Naive thymus-derived CD4-positive, alpha-beta T cell (primary cell): ENCODE measurements at regions of chrX and their contacts with region 1.

Region 1: GRCh38 chrX:12984629-12985319 is 9.9 kb downstream of the TMSB4X start:
- DNase-seq: peak in 8 of 9 donors; percentile 53 to 73 (median 69)
- ATAC-seq: peak; percentile 84
- H3K4me3 ChIP-seq: peak overlapping the region; percentile 21
- H3K4me3 Mint-ChIP-seq: peak overlapping the region; percentile 61 to 82 (median 75)
- H3K27ac ChIP-seq: peak overlapping the region; percentile 67
- H3K27ac Mint-ChIP-seq: peak overlapping the region; percentile 92 to 99 (median 97)
- H3K4me1 ChIP-seq: peaks cover 64 to 67% of the 10 kb centered on the region in 2 donors
- H3K4me1 Mint-ChIP-seq: peaks cover 28 to 90% (median 68%) of the 10 kb centered on the region in 7 donors
- H3K27me3 ChIP-seq: no peaks in the 10 kb centered on the region
- H3K27me3 Mint-ChIP-seq: no peaks in the 10 kb centered on the region

Region 2: DNA sequence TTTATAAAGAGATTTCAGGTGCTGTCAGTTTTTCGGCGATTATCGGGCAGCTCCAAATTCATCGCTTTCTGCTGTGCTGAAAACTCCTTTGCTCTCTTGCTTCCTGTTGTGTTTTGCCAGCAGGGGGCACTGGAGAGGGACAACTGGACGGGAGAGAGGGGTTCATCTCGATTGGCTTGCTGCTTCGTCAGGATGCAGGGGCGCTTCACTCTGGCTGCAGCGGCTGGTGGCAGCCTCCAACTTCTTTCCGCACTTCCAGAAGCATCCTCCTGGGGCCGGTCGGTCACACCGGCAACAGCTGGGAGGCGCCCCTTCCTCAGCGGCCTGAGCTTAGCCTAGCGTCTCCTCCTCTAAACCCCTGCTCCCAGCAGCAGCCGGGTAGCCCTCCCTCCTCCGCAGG is 1197.2 kb before region 1 on chrX:
- CTCF ChIA-PET with region 1: no interaction called
- POLR2A ChIA-PET with region 1: no interaction called
- intact Hi-C with region 1: no loop called
- DNase-seq: peak in 8 of 9 donors; percentile 39 to 70 (median 63)
- ATAC-seq: peak; percentile 79
- H3K4me3 ChIP-seq: peak overlapping the region; percentile 35
- H3K4me3 Mint-ChIP-seq: peak overlapping the region; percentile 53 to 86 (median 75)
- H3K27ac ChIP-seq: peak overlapping the region; percentile 17
- H3K27ac Mint-ChIP-seq: peak overlapping the region in 6 of 9 donors; percentile 25 to 70 (median 45)
- H3K4me1 ChIP-seq: peaks cover 3 to 16% of the 10 kb centered on the region in 2 donors
- H3K4me1 Mint-ChIP-seq: peaks cover under 1 to 44% (median 32%) of the 10 kb centered on the region in 7 donors
- H3K27me3 ChIP-seq: no peaks in the 10 kb centered on the region
- H3K27me3 Mint-ChIP-seq: no peaks in the 10 kb centered on the region

Region 3: DNA sequence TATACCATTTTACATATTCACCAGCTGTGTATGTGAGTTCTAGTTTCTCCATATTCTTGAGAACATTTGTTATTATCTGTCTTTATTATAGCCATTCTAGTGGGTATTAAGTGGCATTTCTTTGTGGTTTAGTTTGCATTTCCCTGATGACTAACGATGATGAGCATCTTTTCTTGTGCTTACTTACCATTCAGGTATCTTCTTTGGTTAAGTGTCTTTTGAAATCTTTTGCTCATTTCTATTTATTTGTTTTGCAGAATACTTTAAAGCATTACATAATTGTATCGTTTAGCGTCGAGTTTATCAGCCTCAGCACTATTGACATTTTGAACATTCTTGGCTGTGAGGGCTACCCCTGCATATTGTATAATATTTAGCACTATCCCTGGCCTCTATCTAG is 761.1 kb before region 1 on chrX:
- CTCF ChIA-PET with region 1: no interaction called
- POLR2A ChIA-PET with region 1: no interaction called
- intact Hi-C with region 1: no loop called
- DNase-seq: no peak
- ATAC-seq: no peak
- H3K4me3 ChIP-seq: no peak overlapping the region
- H3K4me3 Mint-ChIP-seq: no peak overlapping the region
- H3K27ac ChIP-seq: no peak overlapping the region
- H3K27ac Mint-ChIP-seq: no peak overlapping the region
- H3K4me1 ChIP-seq: no peaks in the 10 kb centered on the region
- H3K4me1 Mint-ChIP-seq: no peaks in the 10 kb centered on the region
- H3K27me3 ChIP-seq: no peaks in the 10 kb centered on the region
- H3K27me3 Mint-ChIP-seq: peaks cover 0 to 4% (median 0%) of the 10 kb centered on the region in 5 donors

Region 4: DNA sequence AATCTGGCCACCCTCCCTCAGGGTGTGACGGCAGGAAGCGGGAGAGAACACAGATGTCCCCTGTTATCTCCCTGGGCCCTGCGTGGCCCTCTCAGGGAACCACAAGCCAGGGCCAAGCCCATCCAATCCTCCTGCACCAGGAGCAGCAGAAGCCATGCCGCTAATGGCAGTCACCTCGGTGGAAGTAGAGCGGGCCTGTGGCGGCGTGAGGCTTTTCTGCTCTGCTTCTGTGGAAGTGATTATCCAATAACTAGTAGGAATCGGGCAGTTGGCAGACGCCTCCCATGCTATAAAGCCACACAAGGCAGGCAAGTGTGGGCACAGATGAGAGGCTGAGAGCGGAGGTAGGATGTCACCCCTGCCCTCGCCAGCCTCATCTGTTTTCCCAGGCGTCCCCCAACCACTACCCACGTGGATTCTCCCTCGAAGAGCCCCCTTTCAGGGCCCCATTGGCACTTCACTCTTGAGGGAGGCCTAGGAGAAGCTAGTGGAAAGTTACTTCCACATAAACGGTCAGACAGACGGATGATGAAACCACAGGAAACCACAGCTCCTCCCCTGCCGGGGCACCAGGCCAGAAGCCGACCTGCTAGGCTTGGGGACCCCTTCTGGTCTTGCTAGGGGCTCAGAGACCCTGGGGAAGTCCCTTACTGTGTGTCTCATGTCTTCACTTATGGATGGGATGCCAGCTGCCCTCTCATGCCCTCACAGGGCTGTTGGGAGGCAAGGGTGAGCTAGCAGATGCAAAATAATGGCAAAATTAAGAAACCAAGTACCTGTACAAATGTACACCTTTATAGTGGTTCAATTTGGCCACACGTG is 28.7 kb before region 1 on chrX:
- CTCF ChIA-PET with region 1: interaction called, 5 read pairs
- POLR2A ChIA-PET with region 1: interaction called, 1,267 read pairs
- intact Hi-C with region 1: no loop called
- DNase-seq: peak in 3 of 9 donors; percentile 43 to 73 (median 65)
- ATAC-seq: peak; percentile 58
- H3K4me3 ChIP-seq: peak overlapping the region; percentile 66
- H3K4me3 Mint-ChIP-seq: peak overlapping the region; percentile 77 to 94 (median 88)
- H3K27ac ChIP-seq: peak overlapping the region; percentile 83
- H3K27ac Mint-ChIP-seq: peak overlapping the region; percentile 96 to 99 (median 97)
- H3K4me1 ChIP-seq: peaks cover 68 to 72% of the 10 kb centered on the region in 2 donors
- H3K4me1 Mint-ChIP-seq: peaks cover 20 to 90% (median 71%) of the 10 kb centered on the region in 7 donors
- H3K27me3 ChIP-seq: no peaks in the 10 kb centered on the region
- H3K27me3 Mint-ChIP-seq: no peaks in the 10 kb centered on the region

Region 5: DNA sequence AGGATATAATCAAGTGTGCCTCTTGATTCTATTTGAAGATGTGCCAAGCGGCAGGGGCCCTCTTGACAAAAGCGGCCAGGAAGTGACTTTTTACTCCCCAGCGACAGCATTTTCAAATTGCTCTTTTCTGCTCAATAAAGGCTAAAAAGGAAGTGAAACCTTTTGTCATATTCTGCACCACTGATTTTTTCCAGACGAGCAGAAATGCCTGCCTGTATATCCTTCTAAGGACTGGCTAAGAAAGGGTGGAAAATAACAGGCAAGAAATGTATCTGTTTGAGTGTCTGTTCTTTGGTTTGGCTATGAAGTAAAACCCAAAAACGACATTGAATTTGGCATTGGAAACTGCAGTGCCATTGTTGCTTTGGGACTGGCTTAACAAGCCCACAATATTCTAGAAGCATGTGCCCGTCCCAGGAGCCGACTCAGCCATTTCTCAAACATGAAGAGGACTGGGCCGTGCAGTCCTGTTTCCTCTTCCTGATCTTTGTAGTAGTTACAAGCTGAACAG is 15.6 kb after region 1 on chrX:
- CTCF ChIA-PET with region 1: interaction called, 5 read pairs
- POLR2A ChIA-PET with region 1: interaction called, 873 read pairs
- intact Hi-C with region 1: loop called (anchors 1 kb)
- DNase-seq: peak in 7 of 9 donors; percentile 46 to 74 (median 68)
- ATAC-seq: peak; percentile 65
- H3K4me3 ChIP-seq: peak overlapping the region; percentile 42
- H3K4me3 Mint-ChIP-seq: peak overlapping the region; percentile 70 to 86 (median 84)
- H3K27ac ChIP-seq: peak overlapping the region; percentile 77
- H3K27ac Mint-ChIP-seq: peak overlapping the region; percentile 83 to 98 (median 95)
- H3K4me1 ChIP-seq: peaks cover 66 to 68% of the 10 kb centered on the region in 2 donors
- H3K4me1 Mint-ChIP-seq: peaks cover 27 to 88% (median 74%) of the 10 kb centered on the region in 7 donors
- H3K27me3 ChIP-seq: no peaks in the 10 kb centered on the region
- H3K27me3 Mint-ChIP-seq: no peaks in the 10 kb centered on the region

Region 6: GRCh38 chrX:13051529-13052172 is 66.9 kb after region 1 on chrX:
- CTCF ChIA-PET with region 1: interaction called, 3 read pairs
- POLR2A ChIA-PET with region 1: interaction called, 197 read pairs
- intact Hi-C with region 1: loop called in 1 of 2 experiments (anchors 2 kb)
- DNase-seq: peak in 7 of 9 donors; percentile 69 to 87 (median 79)
- ATAC-seq: peak; percentile 84
- H3K4me3 ChIP-seq: peak overlapping the region; percentile 25
- H3K4me3 Mint-ChIP-seq: peak overlapping the region; percentile 46 to 80 (median 58)
- H3K27ac ChIP-seq: peak overlapping the region; percentile 74
- H3K27ac Mint-ChIP-seq: peak overlapping the region; percentile 93 to 96 (median 95)
- H3K4me1 ChIP-seq: peaks cover 39 to 85% of the 10 kb centered on the region in 2 donors
- H3K4me1 Mint-ChIP-seq: peaks cover 14 to 93% (median 81%) of the 10 kb centered on the region in 7 donors
- H3K27me3 ChIP-seq: no peaks in the 10 kb centered on the region
- H3K27me3 Mint-ChIP-seq: no peaks in the 10 kb centered on the region

Region 7: GRCh38 chrX:13067773-13068172 is 83.0 kb after region 1 on chrX:
- CTCF ChIA-PET with region 1: no interaction called
- POLR2A ChIA-PET with region 1: no interaction called
- intact Hi-C with region 1: no loop called
- DNase-seq: no peak
- ATAC-seq: no peak
- H3K4me3 ChIP-seq: no peak overlapping the region
- H3K4me3 Mint-ChIP-seq: peak overlapping the region in 1 of 10 donors; percentile 1
- H3K27ac ChIP-seq: no peak overlapping the region
- H3K27ac Mint-ChIP-seq: no peak overlapping the region
- H3K4me1 ChIP-seq: peaks cover 0 to 7% of the 10 kb centered on the region in 2 donors
- H3K4me1 Mint-ChIP-seq: peaks cover 12 to 40% (median 23%) of the 10 kb centered on the region in 7 donors
- H3K27me3 ChIP-seq: no peaks in the 10 kb centered on the region
- H3K27me3 Mint-ChIP-seq: no peaks in the 10 kb centered on the region